Activated CD4-positive, alpha-beta memory T cell treated with anti-CD3 and anti-CD28 coated beads for 36 hours (primary cell): ENCODE measurements at regions of chr2 and their contacts with region 1.

Region 1: GRCh38 chr2:127455566-127456493 is 37.6 kb downstream of the PROC start:
- DNase-seq: peak; percentile 60
- H3K4me3 Mint-ChIP-seq: peak overlapping the region; percentile 5
- H3K27ac Mint-ChIP-seq: peak overlapping the region; percentile 74
- H3K4me1 Mint-ChIP-seq: peaks cover 25% of the 10 kb centered on the region
- H3K27me3 Mint-ChIP-seq: peaks cover 3% of the 10 kb centered on the region

Region 2: GRCh38 chr2:127226520-127227263 is 229.1 kb before region 1 on chr2:
- CTCF ChIA-PET with region 1: interaction called, 3 read pairs
- POLR2A ChIA-PET with region 1: no interaction called
- intact Hi-C with region 1: loop called (anchors 1 kb)
- DNase-seq: peak; percentile 87
- H3K4me3 Mint-ChIP-seq: peak overlapping the region; percentile 53
- H3K27ac Mint-ChIP-seq: peak overlapping the region; percentile 73
- H3K4me1 Mint-ChIP-seq: peaks cover 18% of the 10 kb centered on the region
- H3K27me3 Mint-ChIP-seq: peaks cover 40% of the 10 kb centered on the region

Region 3: DNA sequence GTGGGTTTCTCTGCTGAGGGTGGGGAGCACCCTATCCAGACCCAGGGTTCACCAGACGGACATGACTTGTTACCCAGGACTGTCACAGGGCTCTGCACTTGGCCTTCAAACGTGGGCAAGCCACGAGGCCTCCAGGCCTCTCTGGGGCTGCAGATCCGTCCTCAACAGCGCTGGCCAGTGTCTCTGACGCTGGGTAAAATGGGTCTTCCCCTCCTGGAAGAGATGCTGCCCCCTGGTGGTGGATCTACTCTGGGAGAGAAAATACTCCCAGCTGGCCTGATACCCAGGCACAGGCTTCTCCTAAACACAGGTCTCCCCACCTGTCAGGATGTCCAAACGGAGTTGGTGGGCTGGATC is 193.8 kb after region 1 on chr2:
- CTCF ChIA-PET with region 1: no interaction called
- POLR2A ChIA-PET with region 1: no interaction called
- intact Hi-C with region 1: no loop called
- DNase-seq: peak; percentile 83
- H3K4me3 Mint-ChIP-seq: no peak overlapping the region
- H3K27ac Mint-ChIP-seq: no peak overlapping the region
- H3K4me1 Mint-ChIP-seq: peaks cover 7% of the 10 kb centered on the region
- H3K27me3 Mint-ChIP-seq: no peaks in the 10 kb centered on the region

Region 4: GRCh38 chr2:128008074-128008672 is 552.3 kb after region 1 on chr2:
- CTCF ChIA-PET with region 1: no interaction called
- POLR2A ChIA-PET with region 1: no interaction called
- intact Hi-C with region 1: no loop called
- DNase-seq: no peak
- H3K4me3 Mint-ChIP-seq: no peak overlapping the region
- H3K27ac Mint-ChIP-seq: no peak overlapping the region
- H3K4me1 Mint-ChIP-seq: peaks cover 5% of the 10 kb centered on the region
- H3K27me3 Mint-ChIP-seq: no peaks in the 10 kb centered on the region